ENCODE measurements at regions of chr1 and their contacts with region 1.

Region 1: DNA sequence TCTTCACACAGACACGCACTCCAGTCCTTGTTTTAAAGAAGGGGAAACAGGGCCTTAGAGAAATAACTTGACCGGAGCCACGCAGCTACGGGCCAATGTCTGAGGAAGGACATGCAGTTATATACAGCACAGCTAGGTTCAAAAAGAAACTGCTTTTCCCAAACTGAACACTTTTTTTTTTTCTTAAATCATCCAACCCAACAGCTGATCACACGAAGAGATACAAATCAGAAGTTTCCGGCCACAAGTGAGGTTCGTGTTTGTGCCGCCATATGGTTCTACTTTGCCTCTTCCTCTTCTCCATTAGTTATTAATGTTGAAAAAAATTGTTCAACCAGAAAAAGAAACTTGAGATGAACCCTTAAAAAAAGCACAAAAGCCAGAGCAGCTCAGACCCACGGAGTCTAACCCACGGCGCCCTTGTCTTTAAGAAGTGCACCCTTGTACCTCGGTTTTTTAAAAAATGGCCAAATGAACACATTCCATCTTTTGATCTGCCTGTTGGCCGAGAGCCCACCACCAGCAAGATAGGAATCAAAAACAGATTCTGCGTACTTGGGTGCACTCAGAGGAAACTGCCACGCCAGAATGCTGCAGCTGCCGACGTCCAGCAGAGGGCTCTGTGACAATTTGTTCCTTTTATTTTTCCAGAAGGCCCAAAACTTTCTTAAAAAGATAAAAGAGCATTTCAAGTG is 78.9 kb downstream of the SLC66A1 start:
- DNase-seq: peak; percentile 80
- ATAC-seq: peak; percentile 69
- H3K4me3 ChIP-seq: no peak overlapping the region
- H3K27ac ChIP-seq: peak overlapping the region; percentile 94
- H3K4me1 ChIP-seq: peaks cover 24% of the 10 kb centered on the region
- H3K27me3 ChIP-seq: no peaks in the 10 kb centered on the region
- CTCF ChIP-seq: peak; percentile 87
- POLR2A ChIP-seq: no peak
- RAD21 ChIP-seq: peak; percentile 74

Region 2: GRCh38 chr1:19432943-19433718 is 42.1 kb after region 1 on chr1:
- CTCF ChIA-PET with region 1: interaction called, 3 read pairs
- POLR2A ChIA-PET with region 1: no interaction called
- dilution Hi-C with region 1: no loop called
- in situ Hi-C with region 1: no loop called
- intact Hi-C with region 1: loop called (anchors 2 kb)
- DNase-seq: peak; percentile 56
- ATAC-seq: peak; percentile 5; the same call in 1 of the 2 replicates
- H3K4me3 ChIP-seq: no peak overlapping the region
- H3K27ac ChIP-seq: peak overlapping the region; percentile 93; the same call in 1 of the 2 replicates
- H3K4me1 ChIP-seq: peaks cover 53% of the 10 kb centered on the region
- H3K27me3 ChIP-seq: no peaks in the 10 kb centered on the region
- CTCF ChIP-seq: no peak
- POLR2A ChIP-seq: no peak
- RAD21 ChIP-seq: no peak

Region 3: DNA sequence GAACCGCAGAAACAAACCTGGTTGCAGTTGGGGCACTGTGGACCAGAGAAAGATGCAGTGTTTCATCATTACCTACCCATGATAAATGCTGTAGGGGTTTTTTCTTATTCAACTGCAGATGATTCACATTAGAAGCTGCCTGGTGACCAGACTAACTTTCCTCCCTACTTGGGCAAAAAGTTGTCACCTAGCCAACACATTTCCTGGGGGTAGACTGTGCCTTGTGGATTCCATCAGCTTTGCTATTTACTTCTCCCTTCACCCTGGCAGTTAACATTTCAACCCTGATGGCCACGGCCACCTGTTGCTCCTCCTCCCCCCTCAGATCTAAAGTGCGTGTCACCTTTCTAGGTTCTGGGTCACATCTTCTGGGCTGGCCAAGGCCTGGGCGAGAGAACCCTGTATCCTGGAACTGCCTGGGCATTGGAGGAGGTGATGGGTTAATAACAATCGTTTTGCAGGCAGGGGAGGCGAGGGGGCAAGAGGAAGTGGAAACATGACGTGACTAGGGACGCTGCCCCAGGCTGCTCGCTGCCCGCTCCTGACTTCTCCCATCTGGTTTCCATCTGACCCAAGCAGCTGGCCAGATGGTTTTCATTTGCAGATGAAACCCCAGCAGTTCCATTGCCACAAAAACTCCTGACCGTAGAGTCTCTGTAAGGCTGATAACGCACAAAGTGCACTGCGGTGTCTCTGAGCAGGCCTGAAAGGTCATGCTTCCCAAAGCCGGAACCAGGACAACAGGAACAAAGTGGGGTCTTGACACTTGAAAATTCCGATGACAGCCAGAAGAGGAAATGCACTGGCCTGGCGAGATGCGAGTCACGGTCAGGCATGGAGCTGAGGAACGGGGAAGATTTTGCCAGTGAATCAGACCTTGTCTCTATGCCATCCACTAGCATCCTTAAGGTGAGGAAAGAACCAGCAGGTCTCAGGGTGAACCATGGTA is 57.7 kb after region 1 on chr1:
- CTCF ChIA-PET with region 1: no interaction called
- POLR2A ChIA-PET with region 1: interaction called, 3 read pairs
- dilution Hi-C with region 1: no loop called
- in situ Hi-C with region 1: no loop called
- intact Hi-C with region 1: loop called (anchors 2 kb)
- DNase-seq: peak; percentile 93
- ATAC-seq: peak; percentile 53
- H3K4me3 ChIP-seq: no peak overlapping the region
- H3K27ac ChIP-seq: peak overlapping the region; percentile 87
- H3K4me1 ChIP-seq: peaks cover 51% of the 10 kb centered on the region
- H3K27me3 ChIP-seq: no peaks in the 10 kb centered on the region
- CTCF ChIP-seq: no peak
- POLR2A ChIP-seq: no peak
- RAD21 ChIP-seq: peak; percentile 23

Region 4: GRCh38 chr1:19651141-19651737 is 260.2 kb after region 1 on chr1:
- CTCF ChIA-PET with region 1: interaction called, 4 read pairs
- POLR2A ChIA-PET with region 1: no interaction called
- dilution Hi-C with region 1: no loop called
- in situ Hi-C with region 1: loop called (anchors 5 kb)
- intact Hi-C with region 1: loop called (anchors 1 kb)
- DNase-seq: peak; percentile 47
- ATAC-seq: peak; percentile 88
- H3K4me3 ChIP-seq: no peak overlapping the region
- H3K27ac ChIP-seq: no peak overlapping the region
- H3K4me1 ChIP-seq: peaks cover 12% of the 10 kb centered on the region; the same call in 1 of the 2 replicates
- H3K27me3 ChIP-seq: no peaks in the 10 kb centered on the region
- CTCF ChIP-seq: peak; percentile 84
- POLR2A ChIP-seq: no peak
- RAD21 ChIP-seq: peak; percentile 91